ENCODE measurements at regions of chr3 and their contacts with region 1.

Region 1: GRCh38 chr3:153284282-153284938 is 122.4 kb downstream of the RAP2B start:
- DNase-seq: peak; percentile 79
- H3K4me3 Mint-ChIP-seq: peak overlapping the region; percentile 6
- H3K27ac Mint-ChIP-seq: peak overlapping the region; percentile 93
- H3K4me1 Mint-ChIP-seq: peaks cover 30% of the 10 kb centered on the region
- H3K27me3 Mint-ChIP-seq: no peaks in the 10 kb centered on the region
- CTCF ChIP-seq: no peak

Region 2: DNA sequence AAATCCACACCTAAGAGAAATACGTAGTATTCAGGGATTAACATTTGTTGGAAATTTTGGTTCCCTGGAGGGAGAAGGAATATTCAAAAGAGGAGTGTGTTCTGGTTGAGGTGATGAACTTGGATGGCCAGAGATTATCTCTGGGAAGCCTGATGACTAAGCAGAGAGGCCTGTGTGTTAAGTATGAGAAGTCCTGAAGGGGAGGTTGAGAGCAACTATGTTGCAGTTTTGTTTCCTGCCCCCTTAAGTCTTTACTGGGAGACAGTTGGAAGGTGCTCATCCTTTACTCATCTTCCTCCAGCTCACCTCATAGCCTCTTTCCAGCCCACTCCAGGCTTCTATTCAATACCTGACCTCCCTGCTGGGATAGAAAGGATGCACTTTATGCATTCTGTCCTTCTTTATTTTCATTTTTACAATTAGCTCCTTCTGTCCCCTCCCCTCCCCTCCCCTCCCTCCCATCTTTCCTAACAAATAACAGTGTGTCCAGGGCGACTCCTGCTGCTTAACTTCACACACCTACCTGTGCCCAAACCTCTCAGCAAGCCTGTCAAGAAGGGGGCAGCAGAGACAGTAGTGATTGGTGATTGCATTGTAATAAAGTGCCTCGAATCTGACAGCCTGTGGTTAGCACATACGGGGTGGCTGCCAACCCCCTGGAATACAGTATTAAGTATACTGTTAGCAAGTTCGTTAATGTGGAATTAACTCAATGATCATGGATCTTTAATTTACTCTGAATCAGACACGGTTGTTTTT is 110.5 kb before region 1 on chr3:
- CTCF ChIA-PET with region 1: interaction called, 3 read pairs
- POLR2A ChIA-PET with region 1: interaction called, 23 read pairs
- intact Hi-C with region 1: no loop called
- DNase-seq: peak; percentile 39
- H3K4me3 Mint-ChIP-seq: no peak overlapping the region
- H3K27ac Mint-ChIP-seq: no peak overlapping the region
- H3K4me1 Mint-ChIP-seq: no peaks in the 10 kb centered on the region
- H3K27me3 Mint-ChIP-seq: no peaks in the 10 kb centered on the region
- CTCF ChIP-seq: no peak

Region 3: DNA sequence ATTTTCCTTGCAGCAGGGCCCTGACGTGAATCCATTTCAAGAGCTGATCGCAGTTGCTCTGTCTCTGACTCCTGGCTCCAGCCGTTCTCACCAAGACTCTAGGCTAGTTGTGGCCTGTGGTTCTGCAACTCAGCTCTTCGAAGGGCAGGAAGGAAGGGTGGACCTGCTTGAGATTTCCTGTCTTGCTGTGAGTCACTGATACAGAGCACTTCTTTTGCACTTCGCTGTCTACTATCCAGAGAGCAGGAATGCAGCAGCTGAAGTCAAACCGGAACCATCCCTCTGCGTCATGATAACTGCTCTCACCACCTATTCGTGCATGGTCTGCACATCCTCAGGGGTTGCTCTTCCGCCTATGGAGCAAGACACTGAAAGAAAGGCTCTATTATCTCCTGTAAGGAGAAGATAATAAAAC is 62.7 kb before region 1 on chr3:
- CTCF ChIA-PET with region 1: no interaction called
- POLR2A ChIA-PET with region 1: interaction called, 12 read pairs
- intact Hi-C with region 1: loop called (anchors 5 kb)
- DNase-seq: peak; percentile 89
- H3K4me3 Mint-ChIP-seq: peak overlapping the region; percentile 45
- H3K27ac Mint-ChIP-seq: peak overlapping the region; percentile 87
- H3K4me1 Mint-ChIP-seq: peaks cover 17% of the 10 kb centered on the region
- H3K27me3 Mint-ChIP-seq: no peaks in the 10 kb centered on the region
- CTCF ChIP-seq: no peak

Region 4: DNA sequence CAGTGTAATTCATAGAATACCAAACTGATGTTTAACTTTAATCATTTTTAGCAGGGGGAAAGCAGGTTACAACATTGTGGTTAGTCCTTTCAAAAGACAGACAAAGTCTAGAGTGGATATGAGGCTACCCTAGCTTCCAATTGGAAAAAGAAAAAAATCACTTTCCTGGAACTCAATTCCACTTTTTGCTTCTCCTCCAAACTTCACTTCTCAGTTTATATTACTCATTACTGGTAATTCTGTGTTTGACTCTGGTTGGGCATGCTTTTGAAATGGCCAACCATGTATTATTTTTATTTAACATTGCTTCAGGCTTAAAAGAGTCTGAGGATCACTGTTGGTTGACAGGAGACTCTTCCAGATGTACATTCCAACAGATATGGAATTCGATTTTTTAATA is 37.6 kb before region 1 on chr3:
- CTCF ChIA-PET with region 1: no interaction called
- POLR2A ChIA-PET with region 1: no interaction called
- intact Hi-C with region 1: no loop called
- DNase-seq: peak; percentile 13
- H3K4me3 Mint-ChIP-seq: no peak overlapping the region
- H3K27ac Mint-ChIP-seq: no peak overlapping the region
- H3K4me1 Mint-ChIP-seq: peaks cover 18% of the 10 kb centered on the region
- H3K27me3 Mint-ChIP-seq: no peaks in the 10 kb centered on the region
- CTCF ChIP-seq: no peak

Region 5: GRCh38 chr3:153273767-153274435 is 10.5 kb before region 1 on chr3:
- CTCF ChIA-PET with region 1: no interaction called
- POLR2A ChIA-PET with region 1: interaction called, 22 read pairs
- intact Hi-C with region 1: no loop called
- DNase-seq: peak; percentile 41
- H3K4me3 Mint-ChIP-seq: no peak overlapping the region
- H3K27ac Mint-ChIP-seq: no peak overlapping the region
- H3K4me1 Mint-ChIP-seq: no peaks in the 10 kb centered on the region
- H3K27me3 Mint-ChIP-seq: no peaks in the 10 kb centered on the region
- CTCF ChIP-seq: no peak